Testis (tissue), 5 donors: ENCODE measurements at regions of chrX and their contacts with region 1.

Region 1: DNA sequence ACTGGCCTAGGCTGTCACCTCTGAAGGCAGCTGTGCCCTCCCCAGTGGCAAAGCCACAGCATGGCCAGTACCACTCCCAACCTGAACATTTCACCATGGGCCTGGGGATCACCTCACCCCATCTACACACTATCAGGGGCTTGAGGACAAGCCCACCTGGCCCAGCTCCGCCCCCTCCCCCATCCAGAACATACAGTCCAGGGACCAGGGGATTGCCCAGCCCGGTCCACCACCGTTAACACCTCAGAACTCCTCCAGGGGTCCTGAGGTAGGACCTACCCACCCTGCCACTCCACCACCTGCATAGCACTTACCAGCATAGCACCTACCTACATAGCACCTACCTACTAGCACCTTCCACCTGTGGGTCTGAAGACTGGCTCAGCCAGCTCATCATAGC is 179.8 kb downstream of the EDA start:
- DNase-seq: no peak
- H3K4me3 ChIP-seq: no peak overlapping the region
- H3K27ac ChIP-seq: no peak overlapping the region
- H3K4me1 ChIP-seq: no peaks in the 10 kb centered on the region
- H3K27me3 ChIP-seq: no peaks in the 10 kb centered on the region
- CTCF ChIP-seq: no peak
- POLR2A ChIP-seq: no peak

Region 2: DNA sequence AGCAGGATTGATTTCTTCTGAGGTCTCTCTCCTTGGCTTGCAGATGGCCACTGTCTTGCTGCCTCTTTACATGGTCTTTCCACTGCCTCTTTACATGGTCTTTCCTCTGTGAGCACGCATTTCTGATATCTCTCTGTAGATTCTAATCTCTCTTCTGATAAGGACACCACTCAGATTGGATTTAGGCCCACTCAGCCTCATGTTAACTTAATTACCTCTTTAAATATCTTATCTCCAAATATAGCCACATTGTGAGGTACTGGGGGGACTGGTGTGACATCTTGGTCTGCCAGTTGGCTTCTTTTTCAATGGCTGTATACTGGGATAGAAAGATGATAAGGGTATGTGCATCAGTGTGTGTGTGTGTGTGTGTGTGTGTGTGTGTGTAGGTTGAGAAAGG is 100.3 kb after region 1 on chrX:
- intact Hi-C with region 1: loop called (anchors 10 kb)
- DNase-seq: no peak
- H3K4me3 ChIP-seq: no peak overlapping the region
- H3K27ac ChIP-seq: no peak overlapping the region
- H3K4me1 ChIP-seq: no peaks in the 10 kb centered on the region
- H3K27me3 ChIP-seq: no peaks in the 10 kb centered on the region
- CTCF ChIP-seq: no peak
- POLR2A ChIP-seq: no peak